ENCODE measurements at regions of chr12 and their contacts with region 1.

Region 1: GRCh38 chr12:13278249-13278787 is 81.8 kb downstream of the EMP1 start:
- DNase-seq: peak in 1 of 2 experiments; percentile 82
- H3K4me3 ChIP-seq: no peak overlapping the region
- H3K27ac ChIP-seq: no peak overlapping the region
- H3K4me1 ChIP-seq: no peaks in the 10 kb centered on the region
- H3K27me3 ChIP-seq: no peaks in the 10 kb centered on the region
- CTCF ChIP-seq: peak; percentile 90

Region 2: DNA sequence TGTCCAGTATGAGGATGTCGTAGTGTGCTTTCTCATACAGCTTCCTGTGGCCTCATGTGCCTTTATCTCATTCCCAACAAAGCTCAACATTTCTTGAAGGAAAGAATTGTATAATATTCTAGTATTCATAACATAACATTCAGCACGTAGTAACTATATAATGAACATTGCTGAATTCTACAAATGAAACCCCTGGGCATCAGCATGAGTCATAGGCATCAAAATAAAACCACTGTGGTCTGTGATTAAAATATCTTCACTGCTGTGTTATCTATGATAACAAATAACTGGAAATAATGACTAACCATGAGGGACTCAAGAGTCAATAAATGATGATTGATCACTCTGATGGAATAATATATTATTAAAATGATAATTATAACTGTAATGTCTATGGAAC is 173.5 kb after region 1 on chr12:
- CTCF ChIA-PET with region 1: interaction called, 10 read pairs
- POLR2A ChIA-PET with region 1: no interaction called
- intact Hi-C with region 1: no loop called
- DNase-seq: no peak
- H3K4me3 ChIP-seq: no peak overlapping the region
- H3K27ac ChIP-seq: no peak overlapping the region
- H3K4me1 ChIP-seq: peaks cover 7% of the 10 kb centered on the region; the same call in 1 of the 2 replicates
- H3K27me3 ChIP-seq: no peaks in the 10 kb centered on the region
- CTCF ChIP-seq: no peak

Region 3: GRCh38 chr12:13534645-13535398 is 256.5 kb after region 1 on chr12:
- CTCF ChIA-PET with region 1: interaction called, 12 read pairs
- POLR2A ChIA-PET with region 1: no interaction called
- intact Hi-C with region 1: loop called (anchors 2 kb)
- DNase-seq: peak in 1 of 2 experiments; percentile 65
- H3K4me3 ChIP-seq: no peak overlapping the region
- H3K27ac ChIP-seq: no peak overlapping the region
- H3K4me1 ChIP-seq: no peaks in the 10 kb centered on the region
- H3K27me3 ChIP-seq: no peaks in the 10 kb centered on the region
- CTCF ChIP-seq: peak; percentile 92

Region 4: DNA sequence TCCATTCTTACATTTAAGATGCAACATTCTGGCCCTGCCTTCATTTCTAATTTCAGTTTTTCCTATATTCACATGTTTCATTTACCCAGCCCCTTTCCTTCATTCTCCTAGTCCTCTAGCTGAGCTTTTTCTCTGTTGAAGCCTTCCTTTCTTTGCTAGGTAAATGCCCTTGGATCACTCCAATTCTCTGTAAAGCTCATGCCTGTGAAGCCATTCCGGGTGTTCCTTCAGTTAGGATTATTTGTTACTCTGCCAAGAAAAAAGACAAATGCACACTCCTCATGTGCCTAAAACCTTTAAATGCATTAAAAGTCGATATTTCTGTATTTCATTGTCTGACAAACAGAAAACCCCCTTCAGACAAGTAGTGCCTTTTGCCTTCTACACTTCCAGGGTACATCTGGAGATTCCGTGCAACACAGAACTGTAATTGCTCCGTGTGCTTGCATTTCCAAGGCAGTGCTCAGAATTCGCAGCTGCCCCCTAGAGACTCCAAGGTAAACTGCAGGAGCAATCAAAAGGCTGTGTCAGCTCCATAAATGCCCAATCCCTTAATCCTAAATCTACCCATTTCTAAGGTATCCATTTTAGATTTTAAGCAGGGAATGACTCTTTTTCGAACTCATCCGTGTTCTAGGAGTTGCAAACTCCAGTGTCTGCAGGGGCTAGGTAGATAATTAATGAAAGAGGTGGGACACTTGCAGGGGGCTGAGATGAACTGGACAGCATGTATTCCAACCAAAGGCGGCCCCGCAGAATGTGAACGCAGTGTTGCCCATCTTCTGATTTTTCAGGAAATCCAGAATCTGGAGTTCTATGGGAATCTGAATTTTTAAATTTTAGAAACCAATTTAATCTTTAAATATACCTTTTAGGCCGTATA is 382.9 kb after region 1 on chr12:
- CTCF ChIA-PET with region 1: interaction called, 5 read pairs
- POLR2A ChIA-PET with region 1: no interaction called
- intact Hi-C with region 1: loop called (anchors 1 kb)
- DNase-seq: peak in 1 of 2 experiments; percentile 31
- H3K4me3 ChIP-seq: no peak overlapping the region
- H3K27ac ChIP-seq: no peak overlapping the region
- H3K4me1 ChIP-seq: no peaks in the 10 kb centered on the region
- H3K27me3 ChIP-seq: no peaks in the 10 kb centered on the region
- CTCF ChIP-seq: peak; percentile 86